ENCODE measurements at regions of chrX and their contacts with region 1.

Region 1: DNA sequence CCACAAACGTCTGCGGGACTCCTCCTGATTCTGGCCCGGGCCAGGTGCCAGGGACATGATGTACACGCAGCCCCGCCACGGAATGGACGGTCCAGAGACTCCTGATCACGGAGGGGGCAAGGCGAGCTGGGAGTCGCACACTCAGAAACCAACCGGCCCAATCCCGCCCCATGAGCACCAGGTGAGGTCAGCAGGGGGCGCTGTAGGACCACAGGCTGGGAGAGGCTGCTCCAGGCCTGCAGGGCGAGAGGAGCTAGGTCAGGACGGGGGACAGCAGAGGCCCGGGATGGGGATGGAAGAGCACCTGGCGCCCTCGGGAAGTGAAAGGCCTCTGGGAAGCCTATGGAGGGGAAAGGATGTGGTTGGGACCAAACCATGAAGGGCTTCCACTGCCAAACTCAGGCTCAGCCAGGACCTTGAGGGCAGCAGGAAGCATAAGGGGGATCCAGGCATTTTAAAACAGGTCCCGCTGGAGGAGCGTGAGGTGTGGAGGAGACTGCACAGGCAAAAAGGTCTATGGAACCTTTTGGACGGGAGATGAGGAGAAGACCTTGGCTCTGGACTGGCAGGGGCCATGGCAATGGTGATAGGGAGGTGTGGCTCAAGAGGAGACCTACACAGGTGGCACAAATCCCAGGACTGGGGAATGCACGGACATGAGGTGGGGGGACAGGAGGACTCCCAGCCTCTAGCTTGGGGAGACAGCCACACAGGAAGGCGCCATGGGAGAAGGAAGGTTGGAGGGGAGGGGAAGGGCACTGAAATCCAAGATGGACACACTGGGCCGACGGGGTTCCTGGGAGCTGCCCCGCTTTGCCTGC is 79.2 kb downstream of the MTMR1 start:
- DNase-seq: peak; percentile 81
- ATAC-seq: peak; percentile 95
- H3K4me3 ChIP-seq: no peak overlapping the region
- H3K27ac ChIP-seq: no peak overlapping the region
- H3K4me1 ChIP-seq: peaks cover 1% of the 10 kb centered on the region; the same call in 1 of the 2 replicates
- H3K27me3 ChIP-seq: no peaks in the 10 kb centered on the region
- CTCF ChIP-seq: peak; percentile 84

Region 2: GRCh38 chrX:151004082-151004481 is 231.7 kb after region 1 on chrX:
- CTCF ChIA-PET with region 1: interaction called, 3 read pairs
- POLR2A ChIA-PET with region 1: no interaction called
- intact Hi-C with region 1: loop called (anchors 1 kb)
- DNase-seq: no peak
- ATAC-seq: peak; percentile 45; the same call in 1 of the 2 replicates
- H3K4me3 ChIP-seq: no peak overlapping the region
- H3K27ac ChIP-seq: no peak overlapping the region
- H3K4me1 ChIP-seq: no peaks in the 10 kb centered on the region
- H3K27me3 ChIP-seq: no peaks in the 10 kb centered on the region
- CTCF ChIP-seq: peak; percentile 38; the same call in 1 of the 2 replicates

Region 3: DNA sequence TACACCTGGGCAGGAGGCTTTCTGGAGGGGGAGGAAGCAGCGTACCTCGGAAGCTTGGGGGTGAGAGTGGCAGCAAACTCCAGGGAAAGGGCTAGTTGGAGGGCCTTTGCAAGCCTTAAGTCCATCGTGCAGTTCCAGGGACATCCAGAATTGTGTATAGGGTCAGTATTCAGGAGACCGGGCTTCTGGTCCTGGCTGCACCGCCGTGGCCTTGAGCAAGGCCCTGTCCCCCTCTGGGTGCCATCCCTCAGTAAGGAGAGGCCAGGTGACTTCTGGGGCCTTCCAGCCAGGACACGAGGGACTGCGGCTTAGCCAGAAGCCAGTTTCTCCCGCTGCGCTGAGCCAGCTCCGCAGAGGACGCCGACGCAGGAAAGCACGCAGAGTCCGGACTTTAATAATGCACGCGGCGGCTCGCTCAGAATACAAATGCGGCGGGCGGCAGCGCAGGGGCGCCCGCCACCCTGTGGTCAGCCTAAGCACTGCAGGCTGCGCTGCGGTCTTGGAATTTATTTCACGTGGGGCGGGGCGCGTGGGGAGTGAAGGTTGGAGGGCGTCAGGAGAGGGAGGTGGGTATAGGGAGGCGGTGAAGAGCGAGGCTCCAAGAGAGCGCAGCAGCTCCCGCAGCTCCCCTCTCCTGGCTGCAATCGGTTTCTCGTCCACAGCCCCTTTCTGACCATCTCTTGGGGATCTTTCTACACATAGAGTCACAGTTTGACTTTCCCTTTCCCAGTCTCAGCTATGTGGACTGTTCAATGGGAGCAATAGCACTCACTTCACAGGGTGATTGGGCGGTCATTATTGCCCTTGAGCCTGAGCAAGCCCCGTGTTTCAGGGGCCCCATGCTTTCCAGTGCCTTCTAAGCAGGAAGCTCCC is 310.0 kb after region 1 on chrX:
- CTCF ChIA-PET with region 1: interaction called, 14 read pairs
- POLR2A ChIA-PET with region 1: no interaction called
- intact Hi-C with region 1: loop called (anchors 1 kb)
- DNase-seq: peak; percentile 66
- ATAC-seq: peak; percentile 95
- H3K4me3 ChIP-seq: no peak overlapping the region
- H3K27ac ChIP-seq: no peak overlapping the region
- H3K4me1 ChIP-seq: no peaks in the 10 kb centered on the region
- H3K27me3 ChIP-seq: peaks cover 8% of the 10 kb centered on the region; the same call in 1 of the 2 replicates
- CTCF ChIP-seq: peak; percentile 83